Heart left ventricle (tissue), 16 donors: ENCODE measurements at regions of chr1 and their contacts with region 1.

Region 1: GRCh38 chr1:10378081-10378841 is 20.6 kb upstream of the PGD start:
- DNase-seq: peak in 4 of 5 donors; percentile 31 to 64 (median 54)
- ATAC-seq: peak in 3 of 4 donors; percentile 35 to 57 (median 52)
- H3K4me3 ChIP-seq: no peak overlapping the region
- H3K27ac ChIP-seq: peak overlapping the region in 9 of 12 donors; percentile 17 to 78 (median 44)
- H3K4me1 ChIP-seq: peaks cover 0 to 16% (median 5%) of the 10 kb centered on the region in 12 donors
- H3K27me3 ChIP-seq: no peaks in the 10 kb centered on the region
- CTCF ChIP-seq: no peak
- POLR2A ChIP-seq: no peak

Region 2: DNA sequence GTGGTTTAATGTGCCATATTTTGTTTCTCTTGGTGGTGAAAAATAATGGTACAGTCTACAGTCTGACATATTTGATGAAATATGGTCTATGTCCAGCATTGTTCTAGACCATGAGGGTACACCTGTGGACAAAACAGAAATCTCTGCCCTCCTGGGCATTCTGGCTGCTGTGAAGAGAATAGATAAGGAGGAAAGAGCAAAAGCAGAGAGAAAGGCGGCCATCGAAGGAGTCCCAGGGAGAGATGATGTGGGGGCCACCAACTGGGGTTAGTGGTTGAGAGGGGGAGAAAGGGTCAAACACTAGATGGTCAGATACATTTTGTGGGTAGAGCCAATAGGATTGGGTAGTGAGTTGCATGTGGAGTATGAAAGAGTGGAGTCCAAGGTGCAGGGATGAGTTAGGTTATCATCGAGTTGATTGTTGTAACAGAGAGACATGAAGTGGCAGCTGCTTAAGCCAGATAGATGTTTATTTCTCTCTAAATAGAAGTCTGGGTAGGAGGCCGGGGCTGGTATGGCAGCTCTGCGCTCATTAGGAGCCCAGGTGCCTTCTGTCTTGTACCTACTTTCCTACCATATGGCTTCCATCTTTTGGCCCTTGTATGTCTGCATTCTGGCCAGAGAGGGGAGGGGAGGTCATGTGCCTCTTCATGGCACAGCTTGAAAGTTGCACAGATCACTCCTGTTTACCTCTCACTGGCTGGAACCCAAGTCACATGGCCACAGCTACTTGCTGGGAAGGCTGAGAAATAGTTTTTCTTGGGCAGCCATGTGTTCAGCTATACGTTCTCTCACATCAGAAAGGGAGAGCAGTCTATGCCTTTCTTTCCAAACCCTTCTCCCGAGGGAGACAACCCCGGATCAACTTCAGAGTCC is 332.5 kb before region 1 on chr1:
- intact Hi-C with region 1: no loop called
- DNase-seq: no peak
- ATAC-seq: peak in 3 of 4 donors; percentile 21 to 50 (median 45)
- H3K4me3 ChIP-seq: no peak overlapping the region
- H3K27ac ChIP-seq: peak overlapping the region in 7 of 12 donors; percentile 7 to 72 (median 41)
- H3K4me1 ChIP-seq: peaks cover 0 to 53% (median 25%) of the 10 kb centered on the region in 12 donors
- H3K27me3 ChIP-seq: no peaks in the 10 kb centered on the region
- CTCF ChIP-seq: no peak
- POLR2A ChIP-seq: no peak

Region 3: DNA sequence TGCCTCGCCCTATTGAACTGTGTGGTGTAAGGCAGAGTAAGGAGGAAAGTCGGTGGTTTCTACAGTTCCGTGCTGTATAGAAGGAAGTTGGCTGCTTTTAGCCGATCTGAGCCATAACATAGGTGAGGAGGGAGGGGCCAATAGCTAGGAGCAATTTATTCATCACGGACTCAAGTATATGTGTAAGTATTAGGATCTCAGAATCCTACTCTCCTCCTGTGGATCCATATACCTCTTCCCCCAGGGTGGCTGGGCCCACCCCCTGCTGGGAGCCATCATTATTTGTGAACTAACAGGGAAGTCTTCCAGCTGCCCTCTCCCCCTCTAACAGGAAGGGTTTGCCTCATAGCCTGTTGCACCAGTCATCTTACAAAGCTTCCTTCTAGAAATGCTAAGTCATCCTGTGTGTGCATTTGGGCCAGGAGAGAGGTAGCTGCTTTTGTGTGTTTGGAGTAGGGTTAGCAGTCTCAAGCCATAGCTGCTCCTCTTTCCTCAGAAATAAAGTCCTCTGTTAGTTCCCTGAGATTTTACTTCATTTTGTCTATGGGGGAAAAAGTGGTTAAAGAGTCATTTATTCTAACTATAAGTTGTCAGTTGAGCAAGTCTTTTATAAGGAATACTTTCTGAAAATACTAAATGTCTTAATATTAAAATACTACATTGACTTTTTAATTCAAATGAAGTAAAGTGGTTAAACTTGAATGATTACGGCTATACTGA is 37.1 kb after region 1 on chr1:
- intact Hi-C with region 1: loop called in 1 of 10 experiments (anchors 5 kb)
- DNase-seq: peak in 2 of 5 donors; percentile 32 to 34
- ATAC-seq: peak in 3 of 4 donors; percentile 62 to 85 (median 65)
- H3K4me3 ChIP-seq: peak overlapping the region in 1 of 12 donors; percentile 15
- H3K27ac ChIP-seq: peak overlapping the region in 3 of 12 donors; percentile 29 to 72 (median 31)
- H3K4me1 ChIP-seq: peaks cover 0 to 25% (median 0%) of the 10 kb centered on the region in 12 donors
- H3K27me3 ChIP-seq: no peaks in the 10 kb centered on the region
- CTCF ChIP-seq: no peak
- POLR2A ChIP-seq: no peak

Region 4: DNA sequence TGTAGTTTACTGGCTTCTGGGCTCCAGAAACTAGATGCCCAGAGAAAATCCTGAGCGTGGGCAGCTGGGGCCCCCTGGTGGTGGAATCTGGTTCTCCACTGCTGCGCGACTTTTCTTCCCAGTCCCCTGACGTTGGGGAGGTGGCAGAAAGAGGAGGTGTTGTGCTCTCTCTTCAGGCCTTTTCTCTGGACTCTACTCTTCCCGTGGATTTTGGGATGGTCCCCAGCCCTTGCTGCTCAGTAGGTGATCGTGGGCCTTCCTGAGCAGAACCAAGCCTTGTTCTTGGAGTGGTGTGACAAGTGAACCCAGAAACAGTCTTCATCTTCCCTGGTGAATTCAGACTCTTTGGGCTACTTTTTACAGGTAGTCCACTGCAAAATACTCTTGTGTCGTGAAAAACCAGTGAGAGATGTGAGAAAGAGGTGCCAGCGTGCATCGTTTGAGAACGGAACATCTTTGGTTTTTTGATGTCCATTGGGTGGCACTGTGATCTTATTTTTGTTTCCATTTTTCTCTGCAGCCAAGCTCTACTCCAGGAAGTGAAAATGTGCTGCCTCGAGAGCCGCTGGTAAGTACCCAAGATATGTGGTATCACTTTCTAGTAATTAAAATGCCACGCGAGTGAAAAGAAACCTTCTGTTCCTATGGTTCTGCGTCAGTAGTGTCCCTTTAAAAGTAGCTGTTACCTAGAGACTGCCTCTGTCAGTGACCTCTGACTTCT is 116.7 kb after region 1 on chr1:
- intact Hi-C with region 1: loop called in 4 of 10 experiments (anchors 5 to 10 kb)
- DNase-seq: peak; percentile 46 to 82 (median 63)
- ATAC-seq: peak; percentile 87 to 89 (median 88)
- H3K4me3 ChIP-seq: peak overlapping the region in 9 of 12 donors; percentile 11 to 50 (median 30)
- H3K27ac ChIP-seq: peak overlapping the region in 10 of 12 donors; percentile 33 to 81 (median 58)
- H3K4me1 ChIP-seq: peaks cover 0 to 28% (median 18%) of the 10 kb centered on the region in 12 donors
- H3K27me3 ChIP-seq: no peaks in the 10 kb centered on the region
- CTCF ChIP-seq: peak; percentile 76 to 91 (median 87)
- POLR2A ChIP-seq: no peak